ENCODE measurements at regions of chr15 and their contacts with region 1.

Region 1: DNA sequence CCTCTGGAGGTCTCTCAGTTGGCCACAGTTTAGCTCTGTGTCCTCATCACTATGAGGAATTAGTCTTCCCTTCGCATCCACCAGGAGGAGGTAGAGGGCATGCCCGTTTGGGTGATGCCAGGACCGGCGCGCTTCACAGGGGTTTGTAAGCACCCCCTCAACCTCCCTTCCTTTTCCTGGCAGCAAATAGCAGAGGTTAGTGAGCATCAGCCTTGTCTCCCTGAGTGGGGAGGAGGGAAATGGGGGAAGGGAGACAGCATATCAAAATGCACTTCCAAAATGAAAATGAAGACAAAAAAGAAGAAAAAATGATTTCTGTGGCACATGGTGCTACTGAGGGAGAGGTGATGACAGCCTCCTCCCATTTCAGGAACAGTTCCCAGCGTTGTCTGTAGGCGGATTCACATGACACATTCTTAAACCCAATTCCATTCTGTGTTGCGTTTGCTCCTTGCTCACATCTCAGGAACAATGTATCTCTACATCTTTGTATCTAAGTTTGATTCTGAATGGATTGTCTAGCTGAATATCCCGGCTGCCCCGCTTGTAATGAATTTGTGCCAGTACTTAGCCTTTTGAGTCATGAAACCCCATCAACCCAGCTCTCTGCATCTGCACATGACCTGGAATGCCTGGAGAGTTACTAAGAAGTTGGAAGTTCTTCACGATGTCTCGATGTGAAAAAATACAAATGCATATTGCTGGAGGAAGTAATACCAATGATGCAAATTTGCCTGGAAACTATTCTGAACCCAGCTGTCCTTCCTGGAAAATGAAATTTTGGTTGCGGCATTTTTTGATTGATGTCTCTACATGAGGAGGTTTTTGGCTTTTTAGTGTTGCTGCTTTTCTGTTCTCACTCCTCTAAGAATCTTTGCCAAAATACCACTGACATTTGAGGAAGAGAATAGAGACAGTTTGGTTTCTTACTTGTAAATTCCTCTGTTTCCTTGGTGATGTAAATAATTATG is 45.2 kb downstream of the TYRO3 start:
- DNase-seq: peak; percentile 56 to 80 (median 67)
- H3K4me3 ChIP-seq: peak overlapping the region; percentile 17
- H3K27ac ChIP-seq: no peak overlapping the region
- H3K4me1 ChIP-seq: peaks cover 4% of the 10 kb centered on the region
- H3K27me3 ChIP-seq: no peaks in the 10 kb centered on the region
- CTCF ChIP-seq: peak; percentile 49 to 74 (median 56)
- EP300 ChIP-seq: no peak
- POLR2A ChIP-seq: peak; percentile 23

Region 2: GRCh38 chr15:41647262-41647661 is 43.0 kb after region 1 on chr15:
- intact Hi-C with region 1: loop called in 1 of 4 experiments (anchors 1 kb)
- DNase-seq: no peak
- H3K4me3 ChIP-seq: no peak overlapping the region
- H3K27ac ChIP-seq: no peak overlapping the region
- H3K4me1 ChIP-seq: no peaks in the 10 kb centered on the region
- H3K27me3 ChIP-seq: no peaks in the 10 kb centered on the region
- CTCF ChIP-seq: no peak
- EP300 ChIP-seq: no peak
- POLR2A ChIP-seq: no peak

Region 3: DNA sequence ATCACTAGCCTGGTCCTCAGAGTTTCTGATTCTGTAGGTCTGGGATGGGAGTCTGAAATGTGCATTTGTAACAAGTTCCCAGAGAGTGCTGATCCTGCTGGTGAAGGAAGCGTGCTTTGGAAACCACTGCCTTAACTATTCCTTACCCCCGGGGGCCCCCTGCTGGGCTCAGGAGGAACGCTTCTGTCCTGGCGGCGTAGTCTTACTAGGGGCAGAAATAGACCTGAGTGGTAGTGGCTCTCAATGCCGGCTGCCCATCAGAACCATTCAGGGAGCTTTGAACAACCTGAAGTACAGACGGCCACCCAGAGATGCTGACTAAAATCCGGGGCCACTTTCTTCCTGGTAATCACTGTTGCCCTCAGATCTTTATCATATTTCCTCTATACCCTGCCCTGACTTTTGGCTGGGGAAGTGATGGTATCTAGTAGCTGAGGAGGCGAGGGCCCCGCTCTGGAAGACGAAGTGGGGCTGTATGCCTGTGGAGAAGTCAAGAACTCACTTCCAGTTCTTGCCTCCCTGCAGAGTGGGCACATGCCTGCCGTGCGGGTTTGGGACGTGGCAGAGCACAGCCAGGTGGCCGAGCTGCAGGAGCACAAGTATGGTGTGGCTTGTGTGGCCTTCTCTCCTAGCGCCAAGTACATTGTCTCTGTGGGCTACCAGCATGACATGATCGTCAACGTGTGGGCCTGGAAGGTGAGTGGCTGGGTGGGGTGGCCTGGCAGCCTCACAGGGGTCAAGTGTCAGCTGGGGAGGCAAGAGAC is 207.4 kb after region 1 on chr15:
- intact Hi-C with region 1: loop called in 1 of 4 experiments (anchors 5 kb)
- DNase-seq: peak; percentile 75 to 92 (median 89)
- H3K4me3 ChIP-seq: no peak overlapping the region
- H3K27ac ChIP-seq: no peak overlapping the region
- H3K4me1 ChIP-seq: no peaks in the 10 kb centered on the region
- H3K27me3 ChIP-seq: no peaks in the 10 kb centered on the region
- CTCF ChIP-seq: peak; percentile 70 to 90 (median 89)
- EP300 ChIP-seq: no peak
- POLR2A ChIP-seq: no peak